ENCODE measurements at regions of chr3 and their contacts with region 1.

Region 1: GRCh38 chr3:59575113-59576001 is 525.5 kb upstream of the CFAP20DC start:
- DNase-seq: peak; percentile 5
- H3K4me3 ChIP-seq: no peak overlapping the region
- H3K27ac ChIP-seq: no peak overlapping the region
- H3K4me1 ChIP-seq: peaks cover 0 to 21% (median 0%) of the 10 kb centered on the region in 3 donors
- H3K27me3 ChIP-seq: no peaks in the 10 kb centered on the region
- CTCF ChIP-seq: peak; percentile 89 to 99 (median 96)
- POLR2A ChIP-seq: no peak

Region 2: DNA sequence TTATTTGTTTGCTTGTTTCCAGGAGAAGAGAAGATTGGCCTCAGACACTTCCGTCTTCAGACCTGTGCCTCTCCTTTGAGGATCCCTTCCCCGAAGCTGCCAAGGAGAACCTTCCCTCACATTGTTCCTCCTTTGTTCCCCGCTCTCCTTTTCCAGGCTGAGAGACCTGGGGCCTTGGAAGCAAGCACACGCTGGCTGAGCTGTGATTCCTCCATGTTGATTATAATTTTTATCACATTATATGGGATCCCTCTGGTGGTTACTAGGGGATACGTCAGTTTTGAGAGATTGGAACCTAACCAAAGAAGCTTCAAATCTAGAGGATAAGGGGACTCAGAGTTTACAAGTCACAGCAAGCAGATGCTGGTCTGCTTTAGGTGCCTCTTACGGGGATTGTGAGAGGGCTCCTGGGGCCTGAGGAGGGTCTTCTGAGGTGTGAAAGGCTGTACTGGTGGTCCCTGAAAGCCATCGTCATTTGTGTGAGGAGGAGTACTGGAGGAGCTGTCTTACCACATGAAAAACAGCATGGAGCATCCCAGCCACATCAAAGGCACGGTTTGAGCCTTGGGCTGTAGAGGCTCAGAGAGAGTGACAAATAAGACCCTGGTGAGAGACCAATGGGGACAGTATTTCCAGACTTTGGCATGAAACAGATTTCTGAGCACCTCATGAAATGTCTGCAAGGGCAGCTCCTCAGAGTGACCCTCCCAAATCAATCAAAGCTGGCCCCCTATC is 234.5 kb after region 1 on chr3:
- intact Hi-C with region 1: loop called (anchors 5 kb)
- DNase-seq: no peak
- H3K4me3 ChIP-seq: no peak overlapping the region
- H3K27ac ChIP-seq: peak overlapping the region in 2 of 4 donors; percentile 11 to 51
- H3K4me1 ChIP-seq: peaks cover 0 to 8% (median 0%) of the 10 kb centered on the region in 3 donors
- H3K27me3 ChIP-seq: no peaks in the 10 kb centered on the region
- CTCF ChIP-seq: peak in 5 of 6 experiments; percentile 34 to 70 (median 56)
- POLR2A ChIP-seq: no peak

Region 3: GRCh38 chr3:59857589-59858346 is 282.4 kb after region 1 on chr3:
- intact Hi-C with region 1: loop called (anchors 10 kb)
- DNase-seq: no peak
- H3K4me3 ChIP-seq: no peak overlapping the region
- H3K27ac ChIP-seq: no peak overlapping the region
- H3K4me1 ChIP-seq: no peaks in the 10 kb centered on the region
- H3K27me3 ChIP-seq: no peaks in the 10 kb centered on the region
- CTCF ChIP-seq: peak; percentile 67 to 93 (median 87)
- POLR2A ChIP-seq: no peak